GM23248 (cell line): ENCODE measurements at regions of chr9 and their contacts with region 1.

Region 1: DNA sequence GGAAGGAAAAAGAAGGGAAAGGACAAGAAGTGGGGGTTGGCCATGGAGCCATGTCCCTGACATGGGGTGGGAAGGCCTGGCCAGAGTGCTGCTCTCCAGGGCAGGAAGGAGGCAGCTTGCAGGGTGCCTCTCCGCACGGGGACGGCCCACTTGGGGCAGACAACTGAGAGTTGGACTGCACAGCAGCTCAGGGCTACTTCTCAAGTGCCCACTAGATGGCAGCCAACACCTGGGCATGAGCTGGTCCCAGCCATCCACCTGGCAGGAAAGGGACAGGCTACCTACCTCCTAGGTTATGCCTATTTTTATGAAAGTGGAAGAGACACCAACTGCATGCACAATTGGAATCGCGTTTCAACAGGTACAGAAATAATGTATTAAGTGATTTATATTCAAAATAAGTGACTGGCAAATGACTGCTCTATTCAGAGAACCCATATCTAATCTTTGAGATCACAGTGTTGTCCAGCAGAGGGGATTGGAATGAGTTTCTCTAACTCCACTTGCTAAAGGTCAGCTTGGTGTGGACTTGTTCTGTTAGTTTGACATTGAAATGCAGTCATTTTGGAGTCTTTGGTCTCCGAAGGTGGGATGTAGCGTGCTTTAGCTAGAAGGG is 113.4 kb downstream of the SYK start:
- DNase-seq: peak; percentile 84
- H3K4me3 ChIP-seq: no peak overlapping the region
- H3K27ac ChIP-seq: no peak overlapping the region
- H3K4me1 ChIP-seq: no peaks in the 10 kb centered on the region
- H3K27me3 ChIP-seq: no peaks in the 10 kb centered on the region

Region 2: GRCh38 chr9:90770182-90770738 is 144.7 kb before region 1 on chr9:
- in situ Hi-C with region 1: no loop called
- DNase-seq: no peak
- H3K4me3 ChIP-seq: no peak overlapping the region
- H3K27ac ChIP-seq: no peak overlapping the region
- H3K4me1 ChIP-seq: no peaks in the 10 kb centered on the region
- H3K27me3 ChIP-seq: no peaks in the 10 kb centered on the region

Region 3: GRCh38 chr9:91047993-91048607 is 133.1 kb after region 1 on chr9:
- in situ Hi-C with region 1: no loop called
- DNase-seq: peak; percentile 90
- H3K4me3 ChIP-seq: peak overlapping the region; percentile 30
- H3K27ac ChIP-seq: peak overlapping the region; percentile 65
- H3K4me1 ChIP-seq: peaks cover 22% of the 10 kb centered on the region
- H3K27me3 ChIP-seq: no peaks in the 10 kb centered on the region

Region 4: GRCh38 chr9:91433180-91433579 is 518.2 kb after region 1 on chr9:
- in situ Hi-C with region 1: loop called (anchors 10 kb)
- DNase-seq: peak; percentile 94
- H3K4me3 ChIP-seq: peak overlapping the region; percentile 20
- H3K27ac ChIP-seq: peak overlapping the region; percentile 23; the same call in 1 of the 2 replicates
- H3K4me1 ChIP-seq: peaks cover 19% of the 10 kb centered on the region
- H3K27me3 ChIP-seq: no peaks in the 10 kb centered on the region

Region 5: GRCh38 chr9:91676046-91676445 is 761.1 kb after region 1 on chr9:
- in situ Hi-C with region 1: loop called (anchors 10 kb)
- DNase-seq: peak; percentile 72
- H3K4me3 ChIP-seq: no peak overlapping the region
- H3K27ac ChIP-seq: no peak overlapping the region
- H3K4me1 ChIP-seq: peaks cover 9% of the 10 kb centered on the region
- H3K27me3 ChIP-seq: no peaks in the 10 kb centered on the region